ENCODE measurements at regions of chr17 and their contacts with region 1.

Region 1: GRCh38 chr17:76307299-76307965 is 644 bp downstream of the QRICH2 start:
- DNase-seq: no peak
- ATAC-seq: no peak
- H3K4me3 ChIP-seq: no peak overlapping the region
- H3K4me3 Mint-ChIP-seq: no peak overlapping the region
- H3K27ac ChIP-seq: no peak overlapping the region
- H3K27ac Mint-ChIP-seq: no peak overlapping the region
- H3K4me1 ChIP-seq: no peaks in the 10 kb centered on the region
- H3K4me1 Mint-ChIP-seq: no peaks in the 10 kb centered on the region
- H3K27me3 ChIP-seq: no peaks in the 10 kb centered on the region
- H3K27me3 Mint-ChIP-seq: no peaks in the 10 kb centered on the region
- CTCF ChIP-seq: no peak

Region 2: GRCh38 chr17:76397687-76398487 is 90.5 kb after region 1 on chr17:
- CTCF ChIA-PET with region 1: interaction called, 15 read pairs
- POLR2A ChIA-PET with region 1: interaction called, 4 read pairs
- intact Hi-C with region 1: loop called (anchors 1 kb)
- DNase-seq: peak; percentile 76 to 90 (median 83)
- ATAC-seq: peak; percentile 92
- H3K4me3 ChIP-seq: no peak overlapping the region
- H3K4me3 Mint-ChIP-seq: no peak overlapping the region
- H3K27ac ChIP-seq: no peak overlapping the region
- H3K27ac Mint-ChIP-seq: no peak overlapping the region
- H3K4me1 ChIP-seq: no peaks in the 10 kb centered on the region
- H3K4me1 Mint-ChIP-seq: no peaks in the 10 kb centered on the region
- H3K27me3 ChIP-seq: no peaks in the 10 kb centered on the region
- H3K27me3 Mint-ChIP-seq: no peaks in the 10 kb centered on the region
- CTCF ChIP-seq: peak; percentile 94